Kidney (tissue), 22 donors: ENCODE measurements at regions of chr6 and their contacts with region 1.

Region 1: DNA sequence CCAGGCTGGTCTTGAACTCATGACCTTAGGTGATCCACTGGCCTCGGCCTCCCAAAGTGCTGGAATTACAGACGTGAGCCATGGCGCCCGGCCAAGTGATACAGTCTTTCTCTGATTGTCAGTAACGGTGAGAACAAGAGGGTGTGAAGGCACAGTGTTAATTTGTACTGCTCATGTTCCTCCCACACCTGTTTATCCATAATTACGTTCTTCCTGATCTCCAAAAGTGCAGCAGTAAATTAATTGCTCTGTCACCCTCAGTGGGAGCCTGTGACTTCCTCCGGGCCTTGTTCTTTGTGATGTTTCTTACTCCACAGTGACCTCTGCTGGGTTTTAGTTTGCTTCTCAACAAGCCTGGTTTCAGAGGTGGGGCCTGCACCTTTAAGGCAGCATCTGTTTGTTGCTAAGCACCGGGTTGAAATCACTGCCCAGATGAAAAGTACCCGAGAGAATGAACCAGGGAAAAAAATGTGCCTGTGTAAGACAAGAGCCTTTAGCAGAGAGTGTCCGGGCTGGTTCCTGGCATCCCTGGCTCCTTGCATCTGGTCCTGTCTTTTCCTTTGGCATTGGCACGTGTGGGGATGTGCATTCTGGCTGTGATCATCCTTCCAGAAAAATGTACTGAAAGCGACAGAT is 89.1 kb upstream of the CLDN20 start:
- DNase-seq: peak in 4 of 5 donors; percentile 76 to 95 (median 87)
- H3K4me3 ChIP-seq: no peak overlapping the region
- H3K27ac ChIP-seq: no peak overlapping the region
- H3K4me1 ChIP-seq: peaks cover 0 to 2% (median 0%) of the 10 kb centered on the region in 3 donors
- H3K27me3 ChIP-seq: no peaks in the 10 kb centered on the region
- CTCF ChIP-seq: peak; percentile 55

Region 2: DNA sequence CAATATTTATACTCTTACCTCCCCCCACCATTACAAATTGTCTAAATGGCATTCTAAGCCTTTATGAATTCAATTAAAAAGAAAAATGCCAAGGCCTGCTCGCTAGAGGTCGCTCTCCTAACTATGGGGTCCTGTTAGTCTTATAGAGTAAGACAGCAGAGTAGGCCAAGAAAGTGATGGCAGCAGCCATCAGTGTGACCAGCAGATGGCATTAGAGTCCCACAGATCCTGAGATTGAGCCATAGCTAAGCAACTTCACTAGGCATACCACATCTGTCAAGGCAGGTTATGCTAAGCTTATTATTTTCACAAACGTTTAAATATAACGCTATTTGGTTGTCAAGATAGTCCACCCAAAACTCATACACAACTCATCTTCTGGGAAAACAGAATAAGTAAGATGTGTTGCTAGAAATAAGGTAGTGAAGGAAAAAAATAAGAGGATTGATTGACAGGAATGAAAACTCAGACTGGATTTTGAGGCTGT is 499.0 kb before region 1 on chr6:
- intact Hi-C with region 1: loop called (anchors 10 kb)
- DNase-seq: peak; percentile 86 to 98 (median 95)
- H3K4me3 ChIP-seq: no peak overlapping the region
- H3K27ac ChIP-seq: no peak overlapping the region
- H3K4me1 ChIP-seq: no peaks in the 10 kb centered on the region
- H3K27me3 ChIP-seq: no peaks in the 10 kb centered on the region
- CTCF ChIP-seq: peak; percentile 99

Region 3: DNA sequence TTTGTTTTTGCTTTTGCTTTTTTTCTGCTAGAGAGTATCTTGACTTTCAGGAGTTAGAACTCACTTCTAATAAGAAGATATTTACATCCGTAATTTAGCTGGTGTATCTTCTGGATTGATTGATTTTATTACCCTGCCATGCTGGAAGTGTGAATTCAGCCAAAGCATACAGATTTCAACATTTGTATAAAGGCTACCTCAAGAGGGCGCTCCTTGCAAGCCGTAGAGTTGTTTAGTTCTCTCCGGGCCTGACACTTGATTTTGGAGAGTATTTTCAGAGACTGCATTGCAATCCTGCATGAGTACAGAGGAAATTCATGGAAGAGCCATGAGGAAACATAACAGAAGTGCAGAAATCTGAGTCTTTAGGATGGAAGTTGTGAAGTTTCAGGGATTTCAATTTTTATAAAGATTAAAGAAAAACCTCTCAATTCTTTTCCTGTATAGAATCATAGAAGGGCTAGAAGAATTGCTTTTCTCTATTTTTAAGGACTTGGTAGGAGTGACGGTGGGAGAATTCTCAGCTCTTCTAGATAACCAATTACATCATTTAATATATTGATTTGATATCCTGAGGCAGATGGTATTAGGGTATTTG is 246.3 kb before region 1 on chr6:
- intact Hi-C with region 1: loop called (anchors 10 kb)
- DNase-seq: peak in 3 of 5 donors; percentile 71 to 89 (median 83)
- H3K4me3 ChIP-seq: no peak overlapping the region
- H3K27ac ChIP-seq: no peak overlapping the region
- H3K4me1 ChIP-seq: no peaks in the 10 kb centered on the region
- H3K27me3 ChIP-seq: no peaks in the 10 kb centered on the region
- CTCF ChIP-seq: peak; percentile 85

Region 4: GRCh38 chr6:155248008-155249001 is 73.6 kb after region 1 on chr6:
- intact Hi-C with region 1: loop called (anchors 5 kb)
- DNase-seq: peak in 4 of 5 donors; percentile 59 to 75 (median 62)
- H3K4me3 ChIP-seq: no peak overlapping the region
- H3K27ac ChIP-seq: no peak overlapping the region
- H3K4me1 ChIP-seq: no peaks in the 10 kb centered on the region
- H3K27me3 ChIP-seq: no peaks in the 10 kb centered on the region
- CTCF ChIP-seq: peak; percentile 69

Region 5: GRCh38 chr6:155710704-155711103 is 536.0 kb after region 1 on chr6:
- intact Hi-C with region 1: no loop called
- DNase-seq: no peak
- H3K4me3 ChIP-seq: no peak overlapping the region
- H3K27ac ChIP-seq: no peak overlapping the region
- H3K4me1 ChIP-seq: no peaks in the 10 kb centered on the region
- H3K27me3 ChIP-seq: no peaks in the 10 kb centered on the region
- CTCF ChIP-seq: no peak